ENCODE measurements at regions of chr3 and their contacts with region 1.

Region 1: GRCh38 chr3:53709860-53710674 is 136.2 kb downstream of the CHDH start:
- DNase-seq: peak; percentile 53
- ATAC-seq: peak; percentile 97
- H3K4me3 ChIP-seq: no peak overlapping the region
- H3K27ac ChIP-seq: no peak overlapping the region
- H3K4me1 ChIP-seq: no peaks in the 10 kb centered on the region
- H3K27me3 ChIP-seq: peaks cover 5% of the 10 kb centered on the region; the same call in 1 of the 2 replicates
- CTCF ChIP-seq: peak; percentile 79
- POLR2A ChIP-seq: no peak
- RAD21 ChIP-seq: peak; percentile 74

Region 2: DNA sequence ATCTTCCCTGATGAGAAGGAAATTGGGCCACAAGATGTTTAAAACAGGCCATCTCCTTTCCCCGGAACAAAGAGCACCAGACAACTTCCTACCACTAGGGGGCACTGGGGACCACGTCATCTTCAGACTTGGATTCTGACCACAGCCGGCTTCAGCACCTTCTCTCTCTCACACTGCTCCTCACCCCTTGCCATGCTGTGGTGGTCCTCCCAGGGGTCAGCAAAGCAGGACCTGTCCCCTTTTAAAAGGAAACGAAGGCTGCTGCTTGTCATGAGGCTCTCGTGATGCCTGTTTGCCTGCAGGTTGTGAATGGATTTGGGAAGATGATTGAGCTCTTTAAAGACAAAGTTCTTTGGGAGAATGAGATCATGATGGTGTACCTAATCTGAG is 596.1 kb before region 1 on chr3:
- CTCF ChIA-PET with region 1: no interaction called
- POLR2A ChIA-PET with region 1: no interaction called
- dilution Hi-C with region 1: no loop called
- in situ Hi-C with region 1: loop called (anchors 25 kb)
- intact Hi-C with region 1: loop called (anchors 5 kb)
- DNase-seq: peak; percentile 78
- ATAC-seq: peak; percentile 90
- H3K4me3 ChIP-seq: no peak overlapping the region
- H3K27ac ChIP-seq: peak overlapping the region; percentile 8; the same call in 1 of the 2 replicates
- H3K4me1 ChIP-seq: peaks cover 12% of the 10 kb centered on the region
- H3K27me3 ChIP-seq: no peaks in the 10 kb centered on the region
- CTCF ChIP-seq: peak; percentile 92
- POLR2A ChIP-seq: no peak
- RAD21 ChIP-seq: peak; percentile 92

Region 3: DNA sequence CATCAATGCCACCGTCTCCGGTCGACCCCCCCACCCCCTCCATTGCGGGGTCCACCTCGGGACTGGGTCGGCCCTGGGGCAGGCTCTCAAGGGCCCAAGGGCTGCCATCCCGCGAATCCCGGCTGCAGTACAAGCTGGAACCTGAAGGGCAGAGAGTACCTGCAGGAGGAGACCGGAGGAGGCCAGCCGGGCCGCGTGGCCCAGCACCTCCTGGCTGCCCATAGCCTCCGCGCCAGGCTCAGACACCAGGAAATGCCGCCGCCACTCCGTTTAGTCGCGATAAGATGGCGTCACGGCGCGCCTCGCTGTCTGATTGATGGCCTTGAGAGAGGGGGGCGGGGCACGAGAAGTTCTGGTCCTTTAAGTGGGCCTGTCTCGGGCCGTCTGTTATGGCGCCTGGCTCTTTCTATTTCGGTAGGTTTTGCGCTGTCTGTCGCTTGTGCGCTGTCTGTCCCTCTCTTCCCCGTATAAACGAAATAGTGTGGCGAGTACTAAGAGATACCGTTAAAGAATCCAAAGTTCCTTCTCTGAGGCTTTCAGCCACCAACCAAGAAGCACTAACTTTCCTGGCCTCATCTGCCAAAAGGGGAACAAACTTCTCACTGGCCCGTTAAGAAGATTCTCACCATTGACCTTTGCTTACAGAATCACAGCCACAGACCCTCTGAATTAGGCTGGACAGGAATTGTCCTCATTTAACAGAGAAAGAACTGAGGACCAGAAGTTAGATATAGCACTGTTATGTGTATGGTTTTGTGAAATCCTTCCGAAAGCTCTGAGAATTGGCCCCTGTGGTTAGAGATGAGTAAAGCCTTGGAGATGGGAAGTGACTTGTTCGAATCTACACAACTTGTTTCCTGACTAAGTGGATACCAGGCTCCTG is 579.6 kb before region 1 on chr3 and contains the start of gene RFT1:
- CTCF ChIA-PET with region 1: no interaction called
- POLR2A ChIA-PET with region 1: no interaction called
- dilution Hi-C with region 1: no loop called
- in situ Hi-C with region 1: no loop called
- intact Hi-C with region 1: loop called (anchors 1 kb)
- DNase-seq: peak; percentile 94
- ATAC-seq: peak; percentile 94
- H3K4me3 ChIP-seq: peak within 1 kb of the TSS; percentile 89
- H3K27ac ChIP-seq: peak within 1 kb of the TSS; percentile 88
- H3K4me1 ChIP-seq: peaks cover 6% of the 10 kb centered on the region
- H3K27me3 ChIP-seq: no peaks in the 10 kb centered on the region
- CTCF ChIP-seq: no peak
- POLR2A ChIP-seq: peak; percentile 91
- RAD21 ChIP-seq: no peak
- total RNA-seq, gene RFT1: 23.5 and 28.6 TPM in 2 replicates

Region 4: GRCh38 chr3:53219895-53220483 is 490.1 kb before region 1 on chr3:
- CTCF ChIA-PET with region 1: interaction called, 4 read pairs
- POLR2A ChIA-PET with region 1: no interaction called
- dilution Hi-C with region 1: no loop called
- in situ Hi-C with region 1: loop called (anchors 25 kb)
- intact Hi-C with region 1: loop called (anchors 1 kb)
- DNase-seq: peak; percentile 72
- ATAC-seq: peak; percentile 95
- H3K4me3 ChIP-seq: no peak overlapping the region
- H3K27ac ChIP-seq: no peak overlapping the region
- H3K4me1 ChIP-seq: no peaks in the 10 kb centered on the region
- H3K27me3 ChIP-seq: no peaks in the 10 kb centered on the region
- CTCF ChIP-seq: peak; percentile 91
- POLR2A ChIP-seq: peak; percentile 39; the same call in 1 of the 2 replicates
- RAD21 ChIP-seq: peak; percentile 87

Region 5: DNA sequence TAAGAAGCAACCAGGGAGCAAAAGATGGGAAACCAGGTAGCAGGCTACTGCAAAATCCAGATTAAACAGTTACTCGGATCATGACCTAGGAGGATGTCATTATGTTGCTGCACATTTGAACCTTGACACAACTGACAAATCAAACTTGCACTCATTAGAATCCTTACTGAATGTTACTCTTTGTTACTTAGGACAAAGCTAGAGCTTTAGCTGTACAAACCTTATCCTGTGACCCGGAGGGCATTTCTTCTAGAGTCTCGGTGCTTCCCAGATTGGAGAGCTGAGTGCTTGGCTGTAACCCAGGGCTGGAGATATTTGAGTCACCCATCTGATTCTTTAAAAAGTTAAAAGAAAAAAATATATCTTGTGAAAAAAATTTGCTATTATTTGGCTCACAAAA is 406.1 kb before region 1 on chr3:
- CTCF ChIA-PET with region 1: interaction called, 4 read pairs
- POLR2A ChIA-PET with region 1: no interaction called
- dilution Hi-C with region 1: no loop called
- in situ Hi-C with region 1: loop called (anchors 5 kb)
- intact Hi-C with region 1: loop called (anchors 1 kb)
- DNase-seq: peak; percentile 11
- ATAC-seq: no peak
- H3K4me3 ChIP-seq: no peak overlapping the region
- H3K27ac ChIP-seq: no peak overlapping the region
- H3K4me1 ChIP-seq: peaks cover 2% of the 10 kb centered on the region; the same call in 1 of the 2 replicates
- H3K27me3 ChIP-seq: no peaks in the 10 kb centered on the region
- CTCF ChIP-seq: no peak
- POLR2A ChIP-seq: no peak
- RAD21 ChIP-seq: no peak

Region 6: DNA sequence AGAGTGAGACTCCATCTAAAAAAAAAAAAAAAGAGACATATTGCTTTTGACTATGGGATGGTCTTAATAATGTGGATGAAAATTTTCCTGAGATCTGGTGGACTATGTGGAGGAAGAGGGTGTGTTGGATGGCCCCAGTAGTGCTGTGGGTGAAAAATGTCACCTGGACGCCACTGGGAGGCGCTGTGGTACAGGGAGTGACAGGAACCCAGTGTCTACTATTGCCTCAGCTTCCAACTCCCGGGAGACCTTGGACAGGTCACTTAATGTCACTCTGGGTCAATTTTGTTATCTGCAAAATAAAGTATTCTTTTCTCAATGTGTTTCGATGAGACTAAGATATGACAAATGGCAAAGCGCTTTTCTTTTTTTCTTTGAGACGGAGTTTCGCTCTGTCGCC is 335.0 kb before region 1 on chr3:
- CTCF ChIA-PET with region 1: no interaction called
- POLR2A ChIA-PET with region 1: no interaction called
- dilution Hi-C with region 1: no loop called
- in situ Hi-C with region 1: loop called (anchors 10 kb)
- intact Hi-C with region 1: loop called (anchors 1 kb)
- DNase-seq: peak; percentile 41
- ATAC-seq: peak; percentile 87
- H3K4me3 ChIP-seq: no peak overlapping the region
- H3K27ac ChIP-seq: no peak overlapping the region
- H3K4me1 ChIP-seq: no peaks in the 10 kb centered on the region
- H3K27me3 ChIP-seq: peaks cover 2% of the 10 kb centered on the region; the same call in 1 of the 2 replicates
- CTCF ChIP-seq: peak; percentile 59
- POLR2A ChIP-seq: no peak
- RAD21 ChIP-seq: peak; percentile 70

Region 7: GRCh38 chr3:53970661-53971060 is 260.6 kb after region 1 on chr3:
- CTCF ChIA-PET with region 1: no interaction called
- POLR2A ChIA-PET with region 1: no interaction called
- dilution Hi-C with region 1: no loop called
- in situ Hi-C with region 1: no loop called
- intact Hi-C with region 1: no loop called
- DNase-seq: no peak
- ATAC-seq: no peak
- H3K4me3 ChIP-seq: no peak overlapping the region
- H3K27ac ChIP-seq: no peak overlapping the region
- H3K4me1 ChIP-seq: no peaks in the 10 kb centered on the region
- H3K27me3 ChIP-seq: no peaks in the 10 kb centered on the region
- CTCF ChIP-seq: no peak
- POLR2A ChIP-seq: no peak
- RAD21 ChIP-seq: no peak